ENCODE measurements at regions of chr1 and their contacts with region 1.

Region 1: DNA sequence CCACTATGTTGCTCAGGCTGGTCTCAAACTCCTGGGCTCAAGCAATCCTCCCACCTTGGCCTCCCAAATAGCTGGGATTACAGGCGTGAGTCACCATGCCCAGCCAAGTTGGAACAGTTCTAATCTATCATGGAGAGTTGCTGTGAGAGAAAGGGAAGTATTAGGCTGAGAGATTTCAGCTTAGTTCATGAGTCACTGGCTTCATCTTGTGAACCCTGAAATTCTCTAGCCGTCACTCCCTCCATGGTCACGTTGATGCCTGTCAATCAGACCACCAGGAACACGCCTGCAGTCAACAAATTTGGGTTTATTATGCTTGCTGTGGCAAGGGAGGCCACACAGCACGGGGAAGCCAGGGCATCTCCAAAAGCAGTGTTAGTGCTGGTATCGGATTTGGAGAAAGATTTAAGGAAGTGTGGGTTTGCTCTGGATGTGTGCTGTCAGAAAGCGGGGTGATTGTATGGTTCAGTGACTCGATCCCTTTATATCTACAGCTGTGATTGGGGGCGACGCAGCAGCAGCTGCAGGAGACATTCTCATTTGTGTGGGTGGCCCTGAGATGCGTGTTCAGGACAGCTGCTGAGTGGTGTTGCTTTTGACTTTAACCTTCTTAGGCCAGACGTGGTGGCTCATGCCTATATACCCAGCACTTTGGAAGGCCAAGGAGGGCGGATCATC is 18.7 kb downstream of the UQCRHL start:
- DNase-seq: no peak
- ATAC-seq: no peak
- H3K4me3 Mint-ChIP-seq: no peak overlapping the region
- H3K27ac Mint-ChIP-seq: peak overlapping the region; percentile 1; the same call in 1 of the 2 replicates
- H3K4me1 Mint-ChIP-seq: no peaks in the 10 kb centered on the region; the same call in 1 of the 2 replicates
- H3K27me3 Mint-ChIP-seq: no peaks in the 10 kb centered on the region
- CTCF ChIP-seq: no peak

Region 2: DNA sequence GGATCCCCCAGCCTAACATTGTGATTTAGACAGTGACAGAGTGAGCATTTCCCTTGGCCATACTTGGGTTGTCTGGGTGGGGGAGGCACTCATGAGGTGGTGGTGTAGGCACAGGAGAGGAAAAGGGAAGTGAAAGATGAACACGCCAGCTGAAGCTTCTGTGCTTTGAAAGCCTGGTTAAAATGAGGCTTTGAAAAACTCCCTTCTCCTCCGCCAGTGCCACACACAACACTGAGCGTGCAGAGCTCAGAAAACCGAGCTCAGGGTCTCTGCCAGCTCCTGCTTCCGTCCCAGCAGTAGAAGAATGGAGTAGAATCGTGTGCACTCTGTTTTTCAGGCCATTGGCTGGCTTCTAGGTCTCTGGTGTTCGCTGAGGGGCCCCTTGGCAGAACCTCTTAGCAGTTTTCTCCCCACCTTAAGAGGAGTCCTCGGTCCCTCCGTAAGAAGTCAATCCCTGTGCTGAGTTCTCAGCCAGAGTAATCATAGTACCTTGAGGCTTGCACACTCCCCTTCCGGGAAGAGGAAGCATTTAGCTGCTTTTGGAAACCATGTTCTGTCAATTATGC is 91.7 kb before region 1 on chr1:
- CTCF ChIA-PET with region 1: no interaction called
- POLR2A ChIA-PET with region 1: no interaction called
- DNase-seq: no peak
- ATAC-seq: no peak
- H3K4me3 Mint-ChIP-seq: no peak overlapping the region
- H3K27ac Mint-ChIP-seq: no peak overlapping the region
- H3K4me1 Mint-ChIP-seq: no peaks in the 10 kb centered on the region
- H3K27me3 Mint-ChIP-seq: no peaks in the 10 kb centered on the region
- CTCF ChIP-seq: no peak

Region 3: GRCh38 chr1:15760520-15761211 is 28.1 kb before region 1 on chr1:
- CTCF ChIA-PET with region 1: interaction called, 15 read pairs
- POLR2A ChIA-PET with region 1: no interaction called
- DNase-seq: no peak
- ATAC-seq: peak; percentile 5; the same call in 1 of the 2 replicates
- H3K4me3 Mint-ChIP-seq: peak overlapping the region; percentile 91
- H3K27ac Mint-ChIP-seq: peak overlapping the region; percentile 65; the same call in 1 of the 2 replicates
- H3K4me1 Mint-ChIP-seq: peaks cover 49% of the 10 kb centered on the region
- H3K27me3 Mint-ChIP-seq: no peaks in the 10 kb centered on the region
- CTCF ChIP-seq: no peak

Region 4: GRCh38 chr1:15803354-15803753 is 14.6 kb after region 1 on chr1:
- CTCF ChIA-PET with region 1: interaction called, 31 read pairs
- POLR2A ChIA-PET with region 1: no interaction called
- DNase-seq: peak; percentile 36
- ATAC-seq: peak; percentile 54
- H3K4me3 Mint-ChIP-seq: no peak overlapping the region
- H3K27ac Mint-ChIP-seq: no peak overlapping the region
- H3K4me1 Mint-ChIP-seq: peaks cover 19% of the 10 kb centered on the region
- H3K27me3 Mint-ChIP-seq: no peaks in the 10 kb centered on the region; the same call in 1 of the 2 replicates
- CTCF ChIP-seq: no peak; the same call in 1 of the 2 replicates

Region 5: GRCh38 chr1:15847100-15847892 is 58.5 kb after region 1 on chr1 and contains the start of gene SPEN:
- CTCF ChIA-PET with region 1: interaction called, 21 read pairs
- POLR2A ChIA-PET with region 1: no interaction called
- DNase-seq: peak; percentile 95
- ATAC-seq: peak; percentile 73
- H3K4me3 Mint-ChIP-seq: peak within 1 kb of the TSS; percentile 92
- H3K27ac Mint-ChIP-seq: peak within 1 kb of the TSS; percentile 100
- H3K4me1 Mint-ChIP-seq: peaks cover 29% of the 10 kb centered on the region
- H3K27me3 Mint-ChIP-seq: peaks cover 5% of the 10 kb centered on the region; the same call in 1 of the 2 replicates
- CTCF ChIP-seq: no peak
- total RNA-seq, gene SPEN: 48.5 to 50.2 TPM (median 48.8 TPM) in 3 replicates

Region 6: DNA sequence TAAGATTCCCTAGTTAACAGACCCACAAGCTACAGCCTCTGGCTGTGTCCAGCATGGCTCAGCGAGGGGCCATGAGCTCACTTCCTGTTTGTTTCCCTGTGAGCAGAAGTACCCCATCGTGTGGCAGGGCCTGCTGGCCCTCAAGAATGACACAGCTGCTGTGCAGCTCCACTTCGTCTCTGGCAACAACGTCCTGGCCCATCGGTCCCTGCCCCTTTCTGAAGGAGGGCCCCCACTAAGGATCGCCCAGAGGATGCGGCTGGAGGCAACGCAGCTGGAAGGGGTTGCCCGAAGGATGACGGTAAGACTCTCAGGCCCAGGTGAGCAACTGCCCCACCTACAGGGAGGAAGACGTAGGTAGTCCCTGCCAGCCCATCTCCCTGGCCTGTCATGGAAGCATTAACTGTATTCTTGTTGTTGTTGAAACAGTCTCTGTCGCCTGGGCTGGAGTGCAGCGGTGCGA is 149.0 kb after region 1 on chr1:
- CTCF ChIA-PET with region 1: interaction called, 37 read pairs
- POLR2A ChIA-PET with region 1: no interaction called
- DNase-seq: peak; percentile 56
- ATAC-seq: peak; percentile 85
- H3K4me3 Mint-ChIP-seq: no peak overlapping the region
- H3K27ac Mint-ChIP-seq: peak overlapping the region; percentile 81
- H3K4me1 Mint-ChIP-seq: peaks cover 6% of the 10 kb centered on the region
- H3K27me3 Mint-ChIP-seq: no peaks in the 10 kb centered on the region
- CTCF ChIP-seq: no peak

Region 7: GRCh38 chr1:15957228-15958095 is 168.7 kb after region 1 on chr1:
- CTCF ChIA-PET with region 1: interaction called, 16 read pairs
- POLR2A ChIA-PET with region 1: no interaction called
- DNase-seq: peak; percentile 72
- ATAC-seq: peak; percentile 79
- H3K4me3 Mint-ChIP-seq: no peak overlapping the region
- H3K27ac Mint-ChIP-seq: peak overlapping the region; percentile 5; the same call in 1 of the 2 replicates
- H3K4me1 Mint-ChIP-seq: peaks cover 57% of the 10 kb centered on the region
- H3K27me3 Mint-ChIP-seq: no peaks in the 10 kb centered on the region
- CTCF ChIP-seq: peak; percentile 63

Region 8: GRCh38 chr1:15994590-15995351 is 206.0 kb after region 1 on chr1:
- CTCF ChIA-PET with region 1: interaction called, 18 read pairs
- POLR2A ChIA-PET with region 1: no interaction called
- DNase-seq: peak; percentile 60
- ATAC-seq: peak; percentile 85
- H3K4me3 Mint-ChIP-seq: no peak overlapping the region
- H3K27ac Mint-ChIP-seq: no peak overlapping the region
- H3K4me1 Mint-ChIP-seq: no peaks in the 10 kb centered on the region
- H3K27me3 Mint-ChIP-seq: peaks cover 4% of the 10 kb centered on the region; the same call in 1 of the 2 replicates
- CTCF ChIP-seq: peak; percentile 38

Measured in WTC11 (cell line).